ENCODE measurements at regions of chr1 and their contacts with region 1.

Region 1: DNA sequence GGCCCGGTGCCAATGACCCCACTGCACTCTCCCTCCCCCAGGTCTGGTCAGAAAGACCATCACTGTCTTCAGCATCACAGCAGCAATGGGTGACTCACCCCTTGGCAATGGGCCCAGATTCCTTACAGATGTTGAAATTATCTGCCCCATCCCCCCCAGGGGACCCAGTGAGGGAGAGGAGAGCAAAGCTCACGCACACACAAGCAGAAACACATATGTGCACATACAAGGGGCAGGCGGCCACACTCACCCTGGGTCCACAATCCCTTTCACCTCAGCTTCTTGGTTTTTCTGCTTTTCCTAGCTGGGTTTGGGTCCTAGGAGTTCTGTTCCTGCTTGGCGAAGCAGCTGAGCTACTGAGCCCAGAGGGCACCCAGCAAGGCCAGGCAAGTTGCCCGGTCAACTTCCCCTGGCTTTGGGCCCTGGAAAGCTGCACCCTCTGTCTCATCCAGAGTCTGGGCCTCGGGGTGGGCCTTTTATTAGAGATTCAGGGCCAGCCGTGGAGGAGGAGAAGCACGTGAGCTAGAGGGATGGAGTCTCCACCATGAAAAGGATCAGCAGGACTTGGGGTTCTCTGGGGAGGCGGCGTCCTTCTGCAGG is 2.6 kb downstream of the COL16A1 start:
- DNase-seq: peak; percentile 89

Region 2: DNA sequence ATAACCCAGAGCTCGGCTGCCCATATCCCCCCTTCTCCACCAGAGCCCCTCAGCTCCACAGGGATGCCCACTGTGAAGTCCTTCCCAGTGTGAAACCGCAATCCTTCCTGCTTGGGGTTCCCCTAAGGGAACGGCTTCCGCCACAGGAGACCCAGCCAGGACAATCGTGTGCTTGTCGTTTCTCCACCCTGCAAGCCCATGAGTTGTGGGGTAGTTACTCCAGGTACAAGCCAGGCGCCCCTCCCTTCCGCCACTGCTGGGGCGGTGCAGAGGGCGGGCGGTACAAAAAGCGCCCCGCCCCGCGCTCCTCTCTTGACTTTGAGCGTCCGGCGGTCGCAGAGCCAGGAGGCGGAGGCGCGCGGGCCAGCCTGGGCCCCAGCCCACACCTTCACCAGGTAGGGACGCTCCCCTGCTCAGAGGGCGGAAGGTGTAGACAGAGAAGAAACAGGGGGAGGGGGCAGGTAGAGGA is 125.0 kb before region 1 on chr1 and contains the start of gene TINAGL1:
- intact Hi-C with region 1: loop called (anchors 5 kb)
- DNase-seq: peak; percentile 87
- total RNA-seq, gene TINAGL1: 180 TPM

Region 3: DNA sequence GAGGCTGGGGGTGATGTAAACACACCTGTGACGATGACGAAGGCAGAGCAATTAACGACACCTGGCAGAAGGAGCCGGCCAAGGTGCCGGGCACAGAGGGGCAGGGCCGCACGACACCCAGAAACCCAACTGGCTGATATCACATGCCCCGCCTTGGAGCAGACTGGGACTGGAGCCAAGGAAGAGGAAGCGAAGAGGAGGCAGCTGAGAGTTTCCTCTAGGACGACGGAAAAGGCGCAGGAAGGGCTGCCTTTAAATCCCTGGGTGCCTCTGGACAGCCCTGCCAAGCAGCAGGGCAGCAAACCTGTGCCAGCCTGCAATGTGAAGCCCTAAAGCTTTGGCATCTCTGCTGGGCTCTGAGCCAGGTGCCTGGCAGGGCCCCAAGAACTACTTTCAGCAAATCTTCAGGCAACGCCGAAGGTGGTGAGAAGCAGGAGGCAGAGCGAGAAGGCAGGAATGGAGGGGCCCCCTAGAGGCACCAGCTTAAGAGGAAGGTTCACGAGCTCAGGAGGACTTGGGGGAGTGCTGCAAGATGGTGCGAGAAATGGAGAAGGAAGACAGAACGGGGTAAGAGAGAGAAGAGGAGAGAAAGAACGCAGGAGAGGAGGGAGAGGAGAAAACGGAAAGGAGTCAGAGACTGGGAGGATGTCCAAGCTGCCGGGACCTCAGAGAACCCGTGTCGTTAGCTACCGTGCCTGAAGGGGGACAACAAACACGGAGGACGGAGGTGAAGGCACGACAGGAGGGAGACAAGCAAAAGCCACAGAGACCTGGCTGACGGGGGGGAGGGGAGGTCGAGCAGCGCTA is 31.2 kb before region 1 on chr1:
- intact Hi-C with region 1: loop called (anchors 2 kb)
- DNase-seq: peak; percentile 80

Region 4: DNA sequence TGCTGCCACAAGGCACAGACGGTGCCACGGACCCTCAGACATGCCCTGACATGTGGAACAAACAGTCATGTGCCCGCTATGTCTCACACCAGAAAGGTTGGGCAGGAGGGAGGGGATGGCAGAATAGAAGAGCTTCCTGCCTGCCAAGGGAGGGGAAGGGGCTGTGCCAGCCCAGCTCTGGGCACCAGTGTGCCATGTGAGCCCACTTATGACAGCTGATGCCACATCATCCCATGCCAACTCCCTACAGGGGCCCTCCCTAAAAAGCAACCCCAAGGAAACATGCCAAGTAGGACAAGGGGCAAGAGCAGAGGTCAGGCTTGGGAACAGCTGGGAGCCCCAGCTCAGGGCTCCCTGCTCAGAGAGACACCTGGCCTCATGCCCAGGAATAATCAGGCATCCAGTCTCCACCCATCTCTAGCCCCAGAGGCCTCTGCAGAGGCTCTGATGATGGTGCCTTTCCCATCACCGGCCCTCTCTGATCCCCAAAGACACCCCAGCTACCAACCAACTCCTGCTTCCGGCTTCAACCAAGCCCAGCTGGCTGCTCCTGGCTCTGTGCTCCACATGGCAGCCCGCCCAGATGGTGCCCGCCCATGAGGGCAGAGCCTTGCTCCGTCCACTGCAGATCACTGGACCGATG is 52.6 kb after region 1 on chr1:
- intact Hi-C with region 1: loop called (anchors 2 kb)
- DNase-seq: peak; percentile 81

Region 5: GRCh38 chr1:32052887-32053286 is 351.6 kb after region 1 on chr1:
- intact Hi-C with region 1: no loop called
- DNase-seq: no peak

Measured in cardiac septum (tissue), 1 donor.